A673 (cell line): ENCODE measurements at regions of chr2 and their contacts with region 1.

Region 1: GRCh38 chr2:61604433-61604832 is 66.3 kb upstream of the XPO1 start:
- DNase-seq: no peak
- H3K4me3 ChIP-seq: no peak overlapping the region
- H3K27ac ChIP-seq: no peak overlapping the region
- H3K4me1 ChIP-seq: no peaks in the 10 kb centered on the region
- H3K27me3 ChIP-seq: no peaks in the 10 kb centered on the region
- CTCF ChIP-seq: no peak

Region 2: DNA sequence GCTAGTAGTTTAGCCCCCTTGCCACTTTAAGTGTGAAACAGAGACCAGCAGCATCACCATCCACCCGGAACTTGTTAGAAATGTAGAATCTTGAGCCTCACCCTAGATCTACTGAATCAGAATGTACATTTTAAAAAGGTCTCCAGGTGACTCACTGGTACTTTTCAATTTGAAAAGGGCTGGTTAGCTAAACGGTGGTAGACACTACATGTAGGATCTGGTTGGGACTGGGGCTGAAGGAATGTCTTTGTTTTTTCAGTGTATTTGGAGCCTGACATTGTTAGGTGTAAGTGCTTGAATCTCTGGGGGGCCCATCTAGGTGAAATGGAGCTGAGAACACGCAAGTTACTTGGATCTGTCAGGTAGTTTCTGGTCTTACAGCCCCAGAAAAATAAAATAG is 22.3 kb before region 1 on chr2:
- CTCF ChIA-PET with region 1: interaction called, 13 read pairs
- POLR2A ChIA-PET with region 1: no interaction called
- intact Hi-C with region 1: no loop called
- DNase-seq: no peak
- H3K4me3 ChIP-seq: no peak overlapping the region
- H3K27ac ChIP-seq: no peak overlapping the region
- H3K4me1 ChIP-seq: no peaks in the 10 kb centered on the region
- H3K27me3 ChIP-seq: no peaks in the 10 kb centered on the region
- CTCF ChIP-seq: no peak

Region 3: DNA sequence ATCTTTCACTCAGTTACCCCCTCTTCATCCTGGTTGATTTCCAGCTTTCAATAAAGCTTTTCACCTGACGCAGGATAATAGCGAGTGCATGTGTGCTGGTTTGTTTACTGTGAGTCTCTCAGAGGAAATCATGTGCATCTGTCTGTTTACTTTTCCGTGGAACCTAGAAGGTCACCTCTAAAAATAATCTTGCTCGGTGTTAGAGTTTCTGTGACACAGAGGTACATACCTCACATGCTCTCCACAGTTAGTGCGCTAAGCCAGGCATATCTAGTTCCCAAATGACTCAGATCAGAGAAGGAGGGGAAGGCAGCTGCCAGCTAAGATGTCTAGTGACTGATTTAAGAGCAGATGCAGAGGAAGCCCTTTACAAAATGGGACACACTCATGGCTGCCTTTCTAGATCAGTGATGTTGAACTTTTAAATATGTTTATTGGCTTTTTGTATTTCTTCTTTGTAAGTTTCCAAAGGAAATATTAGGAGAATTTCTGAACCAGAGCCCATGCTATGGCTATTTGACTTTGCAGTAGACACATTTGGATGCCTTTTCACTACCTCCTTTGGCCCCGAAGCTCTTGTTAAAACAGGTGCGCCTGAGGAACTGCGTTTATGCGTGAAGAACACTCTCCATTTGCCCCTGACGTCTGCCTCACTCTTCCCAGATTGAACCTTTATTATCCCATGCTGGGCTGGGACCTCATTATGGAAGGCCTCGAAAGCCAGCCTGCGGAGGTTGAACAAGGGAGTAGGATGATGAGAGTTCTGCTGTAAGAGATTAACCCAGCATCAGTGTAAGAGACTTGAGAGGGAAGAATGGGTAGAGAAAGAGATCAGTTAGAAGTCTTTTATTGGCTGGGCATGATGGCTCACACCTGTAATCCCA is 103.8 kb after region 1 on chr2:
- CTCF ChIA-PET with region 1: no interaction called
- POLR2A ChIA-PET with region 1: no interaction called
- intact Hi-C with region 1: no loop called
- DNase-seq: no peak
- H3K4me3 ChIP-seq: no peak overlapping the region
- H3K27ac ChIP-seq: no peak overlapping the region
- H3K4me1 ChIP-seq: no peaks in the 10 kb centered on the region
- H3K27me3 ChIP-seq: no peaks in the 10 kb centered on the region
- CTCF ChIP-seq: no peak